Psoas muscle (tissue), 8 donors: ENCODE measurements at regions of chr4 and their contacts with region 1.

Region 1: GRCh38 chr4:151099229-151099975 is at the start of gene RPS3A:
- DNase-seq: peak; percentile 95 to 98
- ATAC-seq: peak; percentile 98 to 99 (median 98)
- H3K4me3 ChIP-seq: peak within 1 kb of the TSS; percentile 96
- H3K27ac ChIP-seq: peak within 1 kb of the TSS; percentile 95
- H3K4me1 ChIP-seq: peaks cover 19% of the 10 kb centered on the region
- H3K27me3 ChIP-seq: no peaks in the 10 kb centered on the region
- CTCF ChIP-seq: peak; percentile 69
- total RNA-seq, gene RPS3A: 841 to 1,071 (median 926) TPM

Region 2: DNA sequence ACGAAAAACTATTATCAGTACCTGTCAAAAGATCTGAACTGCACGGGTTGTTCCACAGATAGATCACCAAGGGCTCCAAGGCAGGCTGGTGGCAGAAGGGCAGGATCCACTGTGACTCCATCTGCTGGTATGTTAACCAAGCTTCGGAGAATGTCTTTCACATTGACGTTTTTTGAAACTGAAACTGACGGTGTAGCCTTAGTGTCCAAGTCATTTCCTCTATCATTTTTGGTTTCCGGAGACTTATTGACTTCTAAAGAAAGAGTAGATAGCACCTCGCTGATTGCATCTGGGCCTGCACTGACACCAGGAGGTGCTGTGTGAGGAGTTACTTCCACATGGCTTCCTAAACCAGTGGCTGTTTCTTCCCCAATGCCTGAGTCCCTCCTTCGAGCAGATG is 271.2 kb before region 1 on chr4:
- intact Hi-C with region 1: no loop called
- DNase-seq: no peak
- ATAC-seq: no peak
- H3K4me3 ChIP-seq: no peak overlapping the region
- H3K27ac ChIP-seq: no peak overlapping the region
- H3K4me1 ChIP-seq: no peaks in the 10 kb centered on the region
- H3K27me3 ChIP-seq: no peaks in the 10 kb centered on the region
- CTCF ChIP-seq: no peak

Region 3: GRCh38 chr4:152779513-152780266 is 1680.3 kb after region 1 on chr4 and contains the starts of genes ARFIP1 and TIGD4:
- intact Hi-C with region 1: loop called in 1 of 2 experiments (anchors 5 kb)
- DNase-seq: peak; percentile 98 to 99
- ATAC-seq: peak; percentile 99 to 100 (median 100)
- H3K4me3 ChIP-seq: peak within 1 kb of the TSS; percentile 84
- H3K27ac ChIP-seq: peak within 1 kb of the TSS; percentile 91
- H3K4me1 ChIP-seq: peaks cover 14% of the 10 kb centered on the region
- H3K27me3 ChIP-seq: no peaks in the 10 kb centered on the region
- CTCF ChIP-seq: no peak
- total RNA-seq, gene ARFIP1: 8.1 to 15.7 (median 12.4) TPM
- total RNA-seq, gene TIGD4: 0.12 to 0.36 (median 0.13) TPM in 3 of 4 donors, not detected in the other